ENCODE measurements at regions of chr18 and their contacts with region 1.

Region 1: GRCh38 chr18:48777026-48777743 is 173.6 kb downstream of the SMAD7 start:
- H3K4me3 ChIP-seq: no peak overlapping the region
- H3K27ac ChIP-seq: peak overlapping the region; percentile 17; the same call in 1 of the 2 replicates
- H3K4me1 ChIP-seq: peaks cover 11% of the 10 kb centered on the region; the same call in 1 of the 2 replicates
- CTCF ChIP-seq: peak; percentile 93

Region 2: DNA sequence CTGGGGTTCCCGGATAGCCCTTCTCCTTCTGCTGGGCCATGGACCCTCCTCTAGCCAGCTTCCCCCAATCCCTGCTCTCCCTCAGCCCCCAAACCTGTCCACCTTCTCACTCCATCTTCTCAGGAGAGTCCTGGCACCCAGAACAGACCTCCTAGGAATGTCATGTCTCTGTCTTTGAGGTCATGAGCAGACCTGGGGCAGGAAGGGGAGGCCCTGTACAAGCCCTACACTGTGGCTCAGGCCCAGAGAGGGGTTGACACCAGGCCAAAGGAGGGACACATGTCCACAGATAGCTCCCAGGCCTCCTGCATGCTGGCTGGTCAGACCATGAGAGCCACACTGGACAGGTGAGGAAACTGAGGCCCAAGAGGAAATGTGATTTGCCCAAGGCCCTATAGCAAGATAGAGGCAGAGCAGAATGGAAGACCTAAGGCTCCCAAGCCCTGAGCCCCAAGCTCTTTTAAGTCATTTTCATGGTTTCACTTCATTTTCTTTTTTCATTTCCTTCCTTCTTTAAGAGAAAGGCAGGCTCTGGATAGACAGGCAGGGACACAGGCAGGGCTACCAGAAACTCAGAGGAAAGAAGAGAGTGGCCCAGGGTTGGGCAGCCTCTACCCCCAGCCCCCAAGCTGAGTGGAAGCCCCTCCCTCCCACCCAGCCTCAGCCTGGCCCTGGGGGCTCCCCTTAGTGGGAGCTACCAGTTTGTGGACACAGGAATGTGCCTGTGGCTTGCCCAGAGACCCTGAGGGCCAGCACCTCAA is 13.9 kb after region 1 on chr18:
- CTCF ChIA-PET with region 1: interaction called, 28 read pairs
- POLR2A ChIA-PET with region 1: no interaction called
- H3K4me3 ChIP-seq: no peak overlapping the region
- H3K27ac ChIP-seq: no peak overlapping the region
- H3K4me1 ChIP-seq: 0 out of 2 replicates have a peak, but pooled peaks cover 3% of the 10 kb centered on the region
- CTCF ChIP-seq: no peak

Region 3: GRCh38 chr18:48868468-48869466 is 91.6 kb after region 1 on chr18:
- CTCF ChIA-PET with region 1: no interaction called
- POLR2A ChIA-PET with region 1: no interaction called
- H3K4me3 ChIP-seq: no peak overlapping the region
- H3K27ac ChIP-seq: no peak overlapping the region
- H3K4me1 ChIP-seq: peaks cover 6% of the 10 kb centered on the region
- CTCF ChIP-seq: no peak